Activated B cell treated with CpG ODN at 0.5 μM for 24 hours (primary cell): ENCODE measurements at regions of chr14 and their contacts with region 1.

Region 1: DNA sequence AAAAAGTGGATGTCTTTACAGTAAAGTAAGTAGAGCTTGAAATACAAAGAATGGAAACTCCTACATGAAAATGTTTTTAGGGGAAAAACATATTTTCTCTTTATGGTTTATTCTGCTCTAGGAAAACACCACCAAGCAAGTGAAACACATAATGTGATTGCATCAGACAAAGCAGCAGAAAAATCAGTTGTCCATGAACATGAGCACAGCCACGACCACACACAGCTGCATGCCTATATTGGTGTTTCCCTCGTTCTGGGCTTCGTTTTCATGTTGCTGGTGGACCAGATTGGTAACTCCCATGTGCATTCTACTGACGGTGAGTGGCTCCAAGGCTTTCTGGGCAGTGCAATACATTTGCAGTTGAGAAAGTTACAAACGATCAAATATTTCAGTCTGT is 42.6 kb upstream of the PLEKHD1 start:
- DNase-seq: no peak
- ATAC-seq: peak; percentile 87
- H3K4me3 Mint-ChIP-seq: peak overlapping the region; percentile 53
- H3K27ac Mint-ChIP-seq: peak overlapping the region; percentile 71
- H3K4me1 Mint-ChIP-seq: peaks cover 10% of the 10 kb centered on the region
- H3K27me3 Mint-ChIP-seq: no peaks in the 10 kb centered on the region
- CTCF ChIP-seq: no peak

Region 2: GRCh38 chr14:69428289-69428998 is 13.5 kb before region 1 on chr14:
- CTCF ChIA-PET with region 1: interaction called, 3 read pairs
- POLR2A ChIA-PET with region 1: interaction called, 15 read pairs
- intact Hi-C with region 1: loop called (anchors 1 kb)
- DNase-seq: no peak
- ATAC-seq: peak; percentile 89
- H3K4me3 Mint-ChIP-seq: no peak overlapping the region
- H3K27ac Mint-ChIP-seq: peak overlapping the region; percentile 74
- H3K4me1 Mint-ChIP-seq: peaks cover 35% of the 10 kb centered on the region
- H3K27me3 Mint-ChIP-seq: no peaks in the 10 kb centered on the region
- CTCF ChIP-seq: no peak